Activated CD4-positive, alpha-beta T cell treated with anti-CD3 and anti-CD28 coated beads for 36 hours (primary cell): ENCODE measurements at regions of chr2 and their contacts with region 1.

Region 1: DNA sequence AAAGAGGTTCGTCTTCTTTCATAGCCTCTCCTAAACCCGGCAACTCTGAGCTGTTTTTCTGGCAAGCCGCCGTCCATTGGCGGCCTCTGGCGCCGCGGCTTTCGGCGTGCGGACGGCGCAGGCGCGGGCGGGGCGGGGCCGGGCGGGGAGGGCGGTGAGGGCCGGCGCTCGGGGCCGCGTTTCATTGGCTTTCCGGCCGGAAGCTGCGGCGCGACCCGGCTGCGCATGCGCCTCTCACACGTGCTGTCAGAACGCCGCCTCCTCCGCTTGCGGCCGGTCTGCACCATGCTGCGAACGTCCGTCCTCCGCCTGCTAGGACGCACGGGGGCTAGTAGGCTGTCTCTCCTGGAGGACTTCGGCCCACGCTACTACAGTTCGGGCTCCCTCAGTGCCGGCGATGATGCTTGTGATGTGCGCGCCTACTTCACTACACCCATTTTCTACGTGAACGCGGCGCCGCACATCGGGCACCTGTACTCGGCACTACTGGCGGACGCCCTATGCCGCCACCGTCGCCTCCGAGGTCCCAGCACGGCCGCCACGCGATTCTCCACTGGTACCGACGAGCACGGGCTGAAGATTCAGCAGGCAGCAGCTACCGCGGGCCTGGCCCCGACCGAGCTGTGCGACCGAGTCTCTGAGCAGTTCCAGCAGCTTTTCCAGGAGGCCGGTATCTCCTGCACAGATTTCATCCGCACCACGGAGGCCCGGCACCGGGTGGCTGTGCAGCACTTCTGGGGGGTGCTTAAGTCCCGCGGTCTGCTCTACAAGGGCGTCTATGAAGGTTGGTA is at the start of gene MARS2:
- DNase-seq: peak; percentile 96
- ATAC-seq: peak; percentile 79
- H3K4me3 Mint-ChIP-seq: peak within 1 kb of the TSS; percentile 80
- H3K27ac Mint-ChIP-seq: peak within 1 kb of the TSS; percentile 94
- H3K4me1 Mint-ChIP-seq: peaks cover 41% of the 10 kb centered on the region
- H3K27me3 Mint-ChIP-seq: peaks cover 2% of the 10 kb centered on the region
- total RNA-seq, gene MARS2: 9.2 to 12.1 TPM

Region 2: GRCh38 chr2:196639180-196640030 is 1065.9 kb before region 1 on chr2 and contains the start of gene CCDC150:
- CTCF ChIA-PET with region 1: no interaction called
- POLR2A ChIA-PET with region 1: no interaction called
- intact Hi-C with region 1: loop called in 1 of 2 experiments (anchors 1 kb)
- DNase-seq: peak; percentile 97
- ATAC-seq: peak; percentile 100
- H3K4me3 Mint-ChIP-seq: peak within 1 kb of the TSS; percentile 93
- H3K27ac Mint-ChIP-seq: peak within 1 kb of the TSS; percentile 69
- H3K4me1 Mint-ChIP-seq: peaks cover 14% of the 10 kb centered on the region
- H3K27me3 Mint-ChIP-seq: peaks cover 2% of the 10 kb centered on the region
- total RNA-seq, gene CCDC150: 11.8 to 14.6 TPM

Region 3: GRCh38 chr2:197434541-197435513 is 270.5 kb before region 1 on chr2 and contains the start of gene SF3B1:
- CTCF ChIA-PET with region 1: no interaction called
- POLR2A ChIA-PET with region 1: no interaction called
- intact Hi-C with region 1: loop called (anchors 1 to 5 kb)
- DNase-seq: peak; percentile 100
- ATAC-seq: peak; percentile 94
- H3K4me3 Mint-ChIP-seq: peak within 1 kb of the TSS; percentile 98
- H3K27ac Mint-ChIP-seq: peak within 1 kb of the TSS; percentile 99
- H3K4me1 Mint-ChIP-seq: peaks cover 44% of the 10 kb centered on the region
- H3K27me3 Mint-ChIP-seq: no peaks in the 10 kb centered on the region
- total RNA-seq, gene SF3B1: 262 to 277 TPM

Region 4: GRCh38 chr2:197515739-197516392 is 189.4 kb before region 1 on chr2 and contains the start of gene MOB4:
- CTCF ChIA-PET with region 1: no interaction called
- POLR2A ChIA-PET with region 1: no interaction called
- intact Hi-C with region 1: loop called (anchors 1 to 5 kb)
- DNase-seq: peak; percentile 97
- ATAC-seq: peak; percentile 95
- H3K4me3 Mint-ChIP-seq: peak within 1 kb of the TSS; percentile 94
- H3K27ac Mint-ChIP-seq: peak within 1 kb of the TSS; percentile 96
- H3K4me1 Mint-ChIP-seq: peaks cover 21% of the 10 kb centered on the region
- H3K27me3 Mint-ChIP-seq: no peaks in the 10 kb centered on the region
- total RNA-seq, gene MOB4: 10.8 to 17.1 TPM

Region 5: GRCh38 chr2:197740200-197740599 is 34.9 kb after region 1 on chr2:
- CTCF ChIA-PET with region 1: no interaction called
- POLR2A ChIA-PET with region 1: no interaction called
- intact Hi-C with region 1: no loop called
- DNase-seq: no peak
- ATAC-seq: no peak
- H3K4me3 Mint-ChIP-seq: no peak overlapping the region
- H3K27ac Mint-ChIP-seq: no peak overlapping the region
- H3K4me1 Mint-ChIP-seq: no peaks in the 10 kb centered on the region
- H3K27me3 Mint-ChIP-seq: peaks cover 14% of the 10 kb centered on the region

Region 6: GRCh38 chr2:197786010-197786877 is 80.9 kb after region 1 on chr2:
- CTCF ChIA-PET with region 1: interaction called, 3 read pairs
- POLR2A ChIA-PET with region 1: no interaction called
- intact Hi-C with region 1: loop called in 1 of 2 experiments (anchors 2 kb)
- DNase-seq: peak; percentile 87
- ATAC-seq: peak; percentile 82
- H3K4me3 Mint-ChIP-seq: peak overlapping the region; percentile 67
- H3K27ac Mint-ChIP-seq: no peak overlapping the region
- H3K4me1 Mint-ChIP-seq: peaks cover 2% of the 10 kb centered on the region
- H3K27me3 Mint-ChIP-seq: peaks cover 17% of the 10 kb centered on the region

Region 7: GRCh38 chr2:198296665-198297308 is 591.5 kb after region 1 on chr2:
- CTCF ChIA-PET with region 1: interaction called, 4 read pairs
- POLR2A ChIA-PET with region 1: no interaction called
- intact Hi-C with region 1: loop called (anchors 2 to 10 kb)
- DNase-seq: peak; percentile 76
- ATAC-seq: peak; percentile 83
- H3K4me3 Mint-ChIP-seq: no peak overlapping the region
- H3K27ac Mint-ChIP-seq: no peak overlapping the region
- H3K4me1 Mint-ChIP-seq: no peaks in the 10 kb centered on the region
- H3K27me3 Mint-ChIP-seq: peaks cover 9% of the 10 kb centered on the region